Right ventricle myocardium inferior (tissue), 1 donor: ENCODE measurements at regions of chr15 and their contacts with region 1.

Region 1: DNA sequence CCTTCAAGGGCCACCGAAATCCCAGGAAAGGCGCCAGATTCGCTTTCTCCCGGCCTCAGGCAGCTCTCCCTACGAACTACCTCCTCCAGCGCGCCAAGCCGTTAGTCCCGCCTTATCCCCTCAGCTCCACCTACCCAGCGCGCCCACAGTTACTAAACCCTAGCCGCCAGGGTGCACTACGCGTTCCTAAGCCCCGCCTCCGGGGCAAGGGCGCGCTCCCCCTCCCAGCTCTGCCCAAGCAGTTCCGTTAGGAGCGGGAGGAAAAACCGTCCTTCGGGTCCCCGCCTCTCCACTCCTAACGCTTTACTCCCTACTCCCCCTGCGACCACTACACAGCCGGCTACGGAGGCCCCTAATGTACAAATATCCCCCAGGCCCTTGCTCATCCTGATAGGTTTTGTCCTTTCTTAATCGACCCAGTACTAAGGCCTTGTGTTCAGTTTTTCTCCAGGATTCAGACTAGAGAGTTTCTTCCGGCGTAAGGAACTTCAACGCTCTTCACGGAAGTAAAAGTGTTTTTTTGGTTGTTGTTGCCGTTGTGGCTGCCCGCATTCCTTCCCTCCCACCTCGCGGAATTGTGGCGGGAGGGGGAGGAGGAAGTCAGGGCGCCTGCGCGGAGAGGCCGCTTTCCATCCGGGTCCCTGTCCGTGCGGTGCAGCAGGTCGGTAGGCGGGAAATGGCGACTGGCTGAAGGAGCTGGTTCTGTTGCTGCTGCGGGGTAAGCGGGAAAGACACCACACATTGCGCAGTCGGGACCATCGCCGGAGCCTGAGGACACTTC is at the start of gene CTDSPL2:
- DNase-seq: peak; percentile 98
- ATAC-seq: peak; percentile 99
- total RNA-seq, gene CTDSPL2: 16.0 TPM

Region 2: DNA sequence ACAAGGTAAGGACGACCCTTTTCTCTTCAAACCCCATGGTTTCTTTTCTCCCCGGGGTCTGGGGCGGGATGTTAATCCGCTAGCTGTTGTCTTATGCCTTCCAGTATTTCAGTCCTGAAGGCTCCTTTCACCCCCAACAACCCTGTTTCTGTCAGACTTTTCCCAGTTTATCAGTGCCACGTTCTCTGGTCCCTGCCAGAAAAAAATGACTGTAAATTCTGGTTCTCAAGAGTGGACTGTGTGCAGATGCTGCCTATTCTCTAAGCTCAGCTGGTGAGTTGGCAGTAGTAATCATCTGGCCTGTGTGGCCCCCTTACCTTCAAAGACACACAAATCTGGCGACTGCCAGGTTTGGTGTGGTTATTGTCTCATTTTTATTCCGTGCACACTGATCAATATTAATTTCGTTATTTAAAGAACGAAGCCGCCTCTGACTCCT is 137.8 kb before region 1 on chr15:
- intact Hi-C with region 1: loop called (anchors 2 kb)
- DNase-seq: no peak
- ATAC-seq: no peak

Region 3: DNA sequence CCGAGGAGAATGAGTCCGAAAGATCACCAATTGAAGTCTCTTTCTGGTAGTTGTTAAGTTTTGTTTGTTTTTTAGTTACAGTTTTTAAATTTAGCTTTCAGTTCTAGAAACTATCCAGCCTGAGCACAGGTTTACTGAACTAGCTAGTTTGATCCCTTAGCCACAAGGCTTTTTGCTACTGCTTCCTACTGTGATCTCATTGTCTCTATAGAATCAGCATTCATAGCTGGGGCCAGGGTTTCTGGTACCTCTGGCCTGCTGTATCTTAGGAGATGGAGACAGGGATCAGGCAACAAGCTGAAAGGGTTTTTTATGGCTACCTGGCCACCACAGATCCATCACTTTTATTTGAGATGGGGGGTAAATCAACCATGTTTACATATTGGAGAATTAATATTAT is 101.6 kb before region 1 on chr15:
- intact Hi-C with region 1: no loop called
- DNase-seq: no peak
- ATAC-seq: no peak

Region 4: GRCh38 chr15:44458429-44458828 is 31.3 kb after region 1 on chr15:
- intact Hi-C with region 1: no loop called
- DNase-seq: no peak
- ATAC-seq: no peak

Region 5: GRCh38 chr15:44536962-44537734 is 110.0 kb after region 1 on chr15 and contains the start of gene EIF3J:
- intact Hi-C with region 1: loop called (anchors 1 kb)
- DNase-seq: peak; percentile 98
- ATAC-seq: peak; percentile 97
- total RNA-seq, gene EIF3J: 104 TPM

Region 6: GRCh38 chr15:44584162-44584749 is 157.1 kb after region 1 on chr15:
- intact Hi-C with region 1: no loop called
- DNase-seq: no peak
- ATAC-seq: no peak